GM12878 (cell line): ENCODE measurements at regions of chr5 and their contacts with region 1.

Region 1: GRCh38 chr5:177006265-177006972 is at the start of gene UIMC1:
- DNase-seq: peak; percentile 71
- ATAC-seq: peak; percentile 85
- H3K4me3 ChIP-seq: peak within 1 kb of the TSS; percentile 59
- H3K27ac ChIP-seq: peak within 1 kb of the TSS; percentile 78
- H3K4me1 ChIP-seq: peaks cover 4% of the 10 kb centered on the region
- H3K27me3 ChIP-seq: no peaks in the 10 kb centered on the region
- CTCF ChIP-seq: no peak
- EP300 ChIP-seq: peak in 1 of 2 experiments; percentile 8; a peak in 1 of 4 replicates
- POLR2A ChIP-seq: peak; percentile 79
- RAD21 ChIP-seq: no peak
- polyA plus RNA-seq, gene UIMC1: 16.2 to 24.7 TPM

Region 2: DNA sequence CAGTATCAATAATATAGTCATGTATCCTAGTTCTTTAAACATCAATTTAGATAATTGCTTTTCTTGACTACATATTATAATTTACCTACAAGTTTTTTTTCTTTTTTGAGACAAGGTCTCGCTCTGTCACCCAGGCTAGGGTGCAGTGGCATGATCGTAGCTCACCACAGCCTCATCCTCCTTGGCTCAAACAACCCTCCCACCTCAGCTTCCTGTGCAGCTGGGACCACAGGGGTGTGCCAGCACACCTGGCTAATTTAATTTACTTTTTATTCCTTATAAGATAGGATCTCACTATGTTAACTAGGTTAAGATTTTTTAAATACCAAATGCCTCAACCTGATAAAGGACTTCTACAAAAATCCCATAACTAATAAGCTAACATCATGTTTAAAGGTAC is 20.9 kb before region 1 on chr5:
- CTCF ChIA-PET with region 1: no interaction called
- POLR2A ChIA-PET with region 1: interaction called, 4 read pairs
- RAD21 ChIA-PET with region 1: interaction called, 3 read pairs
- SMC1A ChIA-PET with region 1: interaction called, 14 read pairs
- in situ Hi-C with region 1: no loop called
- intact Hi-C with region 1: no loop called
- DNase-seq: no peak
- ATAC-seq: peak; percentile 92
- H3K4me3 ChIP-seq: no peak overlapping the region
- H3K27ac ChIP-seq: no peak overlapping the region
- H3K4me1 ChIP-seq: no peaks in the 10 kb centered on the region
- H3K27me3 ChIP-seq: no peaks in the 10 kb centered on the region
- CTCF ChIP-seq: no peak
- EP300 ChIP-seq: no peak
- POLR2A ChIP-seq: no peak
- RAD21 ChIP-seq: no peak

Region 3: GRCh38 chr5:176994460-176995121 is 11.8 kb before region 1 on chr5:
- CTCF ChIA-PET with region 1: interaction called, 40 read pairs
- POLR2A ChIA-PET with region 1: interaction called, 17 read pairs
- RAD21 ChIA-PET with region 1: interaction called, 8 read pairs
- SMC1A ChIA-PET with region 1: interaction called, 30 read pairs
- in situ Hi-C with region 1: no loop called
- intact Hi-C with region 1: no loop called
- DNase-seq: peak; percentile 77
- ATAC-seq: peak; percentile 87
- H3K4me3 ChIP-seq: peak overlapping the region; percentile 13; the same call in 1 of the 2 replicates
- H3K27ac ChIP-seq: peak overlapping the region; percentile 89
- H3K4me1 ChIP-seq: peaks cover 40% of the 10 kb centered on the region
- H3K27me3 ChIP-seq: no peaks in the 10 kb centered on the region
- CTCF ChIP-seq: no peak
- EP300 ChIP-seq: 0 out of 4 replicates have a peak, but pooled peaks of 1 of the 2 experiments have one; percentile 30
- POLR2A ChIP-seq: no peak
- RAD21 ChIP-seq: no peak

Region 4: GRCh38 chr5:177022384-177023308 is 16.2 kb after region 1 on chr5 and contains the start of gene ZNF346:
- CTCF ChIA-PET with region 1: interaction called, 25 read pairs
- POLR2A ChIA-PET with region 1: interaction called, 11 read pairs
- RAD21 ChIA-PET with region 1: interaction called, 10 read pairs
- SMC1A ChIA-PET with region 1: interaction called, 16 read pairs
- in situ Hi-C with region 1: no loop called
- intact Hi-C with region 1: loop called (anchors 1 kb)
- DNase-seq: peak; percentile 65
- ATAC-seq: peak; percentile 94
- H3K4me3 ChIP-seq: peak within 1 kb of the TSS; percentile 87
- H3K27ac ChIP-seq: peak within 1 kb of the TSS; percentile 80
- H3K4me1 ChIP-seq: peaks cover 6% of the 10 kb centered on the region
- H3K27me3 ChIP-seq: no peaks in the 10 kb centered on the region
- CTCF ChIP-seq: peak; percentile 31 to 50 (median 40); a peak in 3 of 6 replicates
- EP300 ChIP-seq: no peak
- POLR2A ChIP-seq: peak; percentile 94
- RAD21 ChIP-seq: no peak
- polyA plus RNA-seq, gene ZNF346: 6.5 to 7.2 TPM